ENCODE measurements at regions of chr1 and their contacts with region 1.

Region 1: GRCh38 chr1:150578965-150579798 is at the start of gene MCL1:
- DNase-seq: peak; percentile 98
- ATAC-seq: peak; percentile 95
- H3K4me3 ChIP-seq: peak within 1 kb of the TSS; percentile 88
- H3K27ac ChIP-seq: peak within 1 kb of the TSS; percentile 100
- H3K4me1 ChIP-seq: peaks cover 31% of the 10 kb centered on the region
- H3K27me3 ChIP-seq: no peaks in the 10 kb centered on the region
- CTCF ChIP-seq: no peak
- total RNA-seq, gene MCL1: 325 TPM

Region 2: DNA sequence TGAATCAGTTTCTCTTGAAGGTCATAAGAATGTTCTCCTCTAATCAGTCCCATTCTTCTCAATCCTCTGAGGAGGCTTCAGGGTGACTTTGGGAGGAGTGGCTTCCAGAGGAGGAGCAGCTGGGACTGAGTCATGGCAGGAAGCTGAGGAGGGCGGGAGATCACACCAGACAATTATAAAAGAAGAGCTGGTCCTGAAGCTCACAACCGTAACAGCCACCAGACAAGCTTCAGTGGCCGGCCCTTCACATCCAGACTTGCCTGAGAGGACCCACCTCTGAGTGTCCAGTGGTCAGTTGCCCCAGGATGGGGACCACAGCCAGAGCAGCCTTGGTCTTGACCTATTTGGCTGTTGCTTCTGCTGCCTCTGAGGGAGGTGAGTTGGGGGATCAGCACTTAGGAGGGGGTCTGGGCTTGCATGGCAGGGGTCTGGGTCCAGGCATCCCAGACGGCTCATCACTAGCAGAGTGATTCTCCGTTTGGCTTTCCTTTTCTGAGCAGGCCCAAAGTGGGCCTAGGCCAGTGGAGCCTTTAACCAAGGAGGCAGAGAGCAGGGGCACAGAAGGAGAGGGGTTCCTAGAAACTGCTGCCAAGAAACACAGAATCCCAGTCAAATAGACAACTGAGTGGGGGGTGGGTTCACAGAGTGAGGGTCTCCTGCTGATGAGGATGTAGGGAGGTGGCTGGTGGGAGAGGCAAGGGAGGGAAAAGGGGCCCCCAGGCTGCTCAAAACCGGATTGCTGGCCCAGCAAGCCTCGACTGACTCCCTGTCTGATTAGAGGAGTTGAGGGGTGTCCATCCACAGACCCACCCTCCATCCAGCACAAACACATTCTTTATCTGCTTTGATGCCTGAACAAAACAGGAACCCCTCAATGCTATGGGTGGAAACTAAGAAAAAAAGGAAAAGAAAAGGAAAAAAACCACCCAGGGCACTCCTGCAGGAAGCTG is 71.0 kb before region 1 on chr1 and contains the start of gene ECM1:
- intact Hi-C with region 1: no loop called
- DNase-seq: no peak
- ATAC-seq: peak; percentile 66
- H3K4me3 ChIP-seq: peak within 1 kb of the TSS; percentile 16
- H3K27ac ChIP-seq: peak within 1 kb of the TSS; percentile 71
- H3K4me1 ChIP-seq: peaks cover 18% of the 10 kb centered on the region
- H3K27me3 ChIP-seq: no peaks in the 10 kb centered on the region
- CTCF ChIP-seq: no peak
- total RNA-seq, gene ECM1: 15.5 TPM

Region 3: GRCh38 chr1:150629115-150629928 is 50.1 kb after region 1 on chr1 and contains the start of gene ENSA:
- intact Hi-C with region 1: loop called (anchors 10 kb)
- DNase-seq: peak; percentile 98
- ATAC-seq: peak; percentile 96
- H3K4me3 ChIP-seq: peak within 1 kb of the TSS; percentile 78
- H3K27ac ChIP-seq: peak within 1 kb of the TSS; percentile 93
- H3K4me1 ChIP-seq: peaks cover 16% of the 10 kb centered on the region
- H3K27me3 ChIP-seq: no peaks in the 10 kb centered on the region
- CTCF ChIP-seq: no peak
- total RNA-seq, gene ENSA: 188 TPM

Region 4: GRCh38 chr1:150974580-150975478 is 395.6 kb after region 1 on chr1 and contains the start of gene CERS2:
- intact Hi-C with region 1: no loop called
- DNase-seq: peak; percentile 94
- ATAC-seq: peak; percentile 71
- H3K4me3 ChIP-seq: peak within 1 kb of the TSS; percentile 68
- H3K27ac ChIP-seq: peak within 1 kb of the TSS; percentile 92
- H3K4me1 ChIP-seq: peaks cover 73% of the 10 kb centered on the region
- H3K27me3 ChIP-seq: no peaks in the 10 kb centered on the region
- CTCF ChIP-seq: no peak
- total RNA-seq, gene CERS2: 354 TPM